Calu3 (cell line): ENCODE measurements at regions of chr6 and their contacts with region 1.

Region 1: GRCh38 chr6:28355743-28356665 is 6.3 kb downstream of the ZKSCAN3 start:
- DNase-seq: peak; percentile 83
- H3K4me3 Mint-ChIP-seq: peak overlapping the region; percentile 86
- H3K27ac Mint-ChIP-seq: peak overlapping the region; percentile 72
- H3K4me1 Mint-ChIP-seq: peaks cover 17% of the 10 kb centered on the region
- H3K27me3 Mint-ChIP-seq: no peaks in the 10 kb centered on the region
- CTCF ChIP-seq: peak; percentile 84

Region 2: DNA sequence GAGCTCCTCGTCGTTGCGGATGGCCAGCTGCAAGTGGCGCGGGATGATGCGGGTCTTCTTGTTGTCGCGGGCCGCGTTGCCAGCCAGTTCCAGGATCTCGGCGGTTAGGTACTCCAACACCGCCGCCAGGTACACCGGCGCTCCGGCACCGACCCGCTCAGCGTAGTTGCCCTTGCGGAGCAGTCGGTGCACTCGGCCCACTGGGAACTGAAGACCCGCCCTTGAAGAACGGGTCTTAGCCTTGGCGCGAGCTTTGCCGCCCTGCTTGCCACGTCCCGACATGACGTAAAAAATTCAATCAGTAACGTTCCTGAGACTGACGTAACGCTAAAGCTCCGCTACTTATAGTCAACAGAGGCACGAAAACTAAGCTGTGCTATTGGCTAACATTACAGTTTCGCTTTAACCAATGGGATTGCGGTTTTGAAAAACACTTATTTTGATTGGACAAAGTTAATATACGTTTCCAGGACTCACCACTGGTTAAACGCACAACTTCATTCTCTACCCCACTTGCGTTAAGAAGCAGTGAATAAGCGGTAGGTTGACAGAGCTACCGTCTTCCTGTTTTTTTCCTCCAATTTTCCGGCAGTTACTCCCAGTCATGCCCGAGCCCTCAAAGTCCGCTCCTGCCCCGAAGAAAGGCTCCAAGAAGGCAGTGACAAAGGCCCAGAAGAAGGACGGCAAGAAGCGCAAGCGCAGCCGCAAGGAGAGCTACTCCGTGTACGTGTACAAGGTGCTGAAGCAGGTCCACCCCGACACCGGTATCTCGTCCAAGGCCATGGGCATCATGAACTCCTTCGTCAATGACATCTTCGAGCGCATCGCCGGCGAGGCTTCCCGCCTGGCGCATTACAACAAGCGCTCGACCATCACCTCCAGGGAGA is 517.7 kb before region 1 on chr6:
- CTCF ChIA-PET with region 1: no interaction called
- intact Hi-C with region 1: loop called (anchors 10 kb)
- DNase-seq: peak; percentile 86
- H3K4me3 Mint-ChIP-seq: no peak overlapping the region
- H3K27ac Mint-ChIP-seq: no peak overlapping the region
- H3K4me1 Mint-ChIP-seq: peaks cover 17% of the 10 kb centered on the region
- H3K27me3 Mint-ChIP-seq: no peaks in the 10 kb centered on the region
- CTCF ChIP-seq: no peak

Region 3: GRCh38 chr6:28136585-28137504 is 219.2 kb before region 1 on chr6:
- CTCF ChIA-PET with region 1: interaction called, 10 read pairs
- intact Hi-C with region 1: loop called (anchors 2 kb)
- DNase-seq: peak; percentile 90
- H3K4me3 Mint-ChIP-seq: peak overlapping the region; percentile 97
- H3K27ac Mint-ChIP-seq: peak overlapping the region; percentile 93
- H3K4me1 Mint-ChIP-seq: peaks cover 30% of the 10 kb centered on the region
- H3K27me3 Mint-ChIP-seq: no peaks in the 10 kb centered on the region
- CTCF ChIP-seq: no peak

Region 4: GRCh38 chr6:28252009-28252975 is 103.7 kb before region 1 on chr6 and contains the start of gene ZKSCAN4:
- CTCF ChIA-PET with region 1: interaction called, 11 read pairs
- intact Hi-C with region 1: no loop called
- DNase-seq: peak; percentile 84
- H3K4me3 Mint-ChIP-seq: peak within 1 kb of the TSS; percentile 100
- H3K27ac Mint-ChIP-seq: peak within 1 kb of the TSS; percentile 64
- H3K4me1 Mint-ChIP-seq: peaks cover 10% of the 10 kb centered on the region
- H3K27me3 Mint-ChIP-seq: no peaks in the 10 kb centered on the region
- CTCF ChIP-seq: no peak
- total RNA-seq, gene ZKSCAN4: 6.1 and 6.7 TPM in 2 replicates

Region 5: DNA sequence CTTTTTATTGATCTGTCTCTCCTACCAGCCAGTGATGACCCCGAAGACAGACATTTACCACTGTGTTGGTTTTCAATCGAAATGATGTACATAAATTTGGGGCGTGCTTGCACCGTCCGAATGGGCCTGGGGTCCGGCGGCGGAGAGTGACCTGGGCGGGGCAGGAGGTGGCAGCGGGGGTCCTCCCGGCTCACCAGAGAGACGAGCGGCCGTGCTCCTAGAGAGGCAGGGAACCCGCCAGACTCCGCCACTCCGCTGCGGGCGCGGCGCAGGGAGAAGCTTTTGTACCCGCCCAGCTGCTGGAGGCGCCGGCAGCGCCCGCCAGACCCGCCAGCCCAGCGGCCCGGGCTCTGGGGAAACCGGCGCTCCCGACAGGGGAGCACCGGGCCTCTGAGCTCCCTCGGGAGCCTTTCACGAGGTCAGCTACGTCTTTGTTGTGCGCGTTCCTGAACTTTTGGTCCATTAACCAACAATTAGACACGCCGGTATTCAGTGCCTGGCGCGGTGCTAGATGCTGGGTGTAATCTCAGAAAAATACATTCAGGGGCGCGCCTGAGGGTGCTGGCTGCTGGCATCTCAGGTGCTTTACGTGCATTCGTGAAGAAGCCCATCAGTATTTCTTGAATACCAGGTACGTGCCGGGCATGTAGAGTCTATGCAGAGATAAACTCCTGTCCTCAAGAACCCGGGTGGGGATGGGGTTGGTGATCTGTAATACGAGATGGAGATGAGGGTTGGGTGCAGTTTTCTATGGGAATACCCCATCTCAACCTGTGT is 74.5 kb before region 1 on chr6 and contains the start of gene PGBD1:
- CTCF ChIA-PET with region 1: interaction called, 10 read pairs
- intact Hi-C with region 1: loop called (anchors 5 kb)
- DNase-seq: peak; percentile 86
- H3K4me3 Mint-ChIP-seq: peak within 1 kb of the TSS; percentile 91
- H3K27ac Mint-ChIP-seq: peak within 1 kb of the TSS; percentile 53
- H3K4me1 Mint-ChIP-seq: peaks cover 10% of the 10 kb centered on the region
- H3K27me3 Mint-ChIP-seq: no peaks in the 10 kb centered on the region
- CTCF ChIP-seq: no peak
- total RNA-seq, gene PGBD1: 3.1 and 4.9 TPM in 2 replicates

Region 6: DNA sequence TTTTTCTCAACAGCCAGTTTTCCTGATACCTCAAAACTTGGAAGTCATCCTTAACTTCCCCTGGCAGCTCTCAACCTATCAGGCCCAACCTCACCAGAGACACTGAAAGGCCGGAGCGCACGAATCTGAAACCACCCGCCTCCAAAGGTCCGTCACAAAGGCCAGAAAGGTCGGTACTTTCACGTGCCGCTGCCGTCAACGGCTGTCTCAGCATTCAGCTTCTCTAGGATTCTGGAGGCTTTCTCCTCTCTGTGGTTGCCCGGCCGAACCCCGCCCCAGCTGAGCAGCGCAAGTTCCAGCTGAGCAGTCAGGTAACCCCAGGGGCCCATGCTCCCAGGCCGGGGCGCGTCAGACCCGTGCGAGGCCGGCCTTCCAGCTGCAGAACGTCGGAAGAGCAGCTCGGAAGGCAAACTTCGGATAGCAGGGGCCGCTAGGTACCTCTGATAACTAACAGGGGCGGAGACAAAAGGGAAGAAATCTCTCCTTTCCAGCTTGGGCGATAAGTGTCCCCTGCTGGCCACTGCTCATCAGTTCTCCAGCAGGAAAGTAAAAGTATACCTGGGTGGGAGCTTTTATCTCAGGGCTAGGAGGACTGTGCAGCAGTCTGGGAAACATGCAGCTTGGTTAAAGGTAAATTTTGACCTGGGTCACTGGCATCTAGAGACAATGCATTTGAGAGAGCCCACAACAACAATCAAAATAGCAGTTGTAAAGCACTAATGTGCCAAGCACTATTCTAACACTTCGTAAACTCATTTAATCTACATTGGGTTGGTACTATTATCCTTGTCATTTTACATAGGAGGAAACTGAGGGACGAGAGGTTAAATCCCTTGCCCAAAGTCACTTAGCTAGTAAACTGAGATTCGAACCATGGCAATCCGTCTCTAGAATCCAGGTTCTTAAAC is 27.5 kb after region 1 on chr6:
- CTCF ChIA-PET with region 1: interaction called, 14 read pairs
- intact Hi-C with region 1: loop called (anchors 2 kb)
- DNase-seq: peak; percentile 90
- H3K4me3 Mint-ChIP-seq: peak overlapping the region; percentile 85
- H3K27ac Mint-ChIP-seq: peak overlapping the region; percentile 88
- H3K4me1 Mint-ChIP-seq: peaks cover 13% of the 10 kb centered on the region
- H3K27me3 Mint-ChIP-seq: no peaks in the 10 kb centered on the region
- CTCF ChIP-seq: peak; percentile 77

Region 7: GRCh38 chr6:28399350-28400121 is 43.5 kb after region 1 on chr6 and contains the start of gene ZSCAN12:
- CTCF ChIA-PET with region 1: no interaction called
- intact Hi-C with region 1: no loop called
- DNase-seq: peak; percentile 64
- H3K4me3 Mint-ChIP-seq: peak within 1 kb of the TSS; percentile 73
- H3K27ac Mint-ChIP-seq: peak within 1 kb of the TSS; percentile 25
- H3K4me1 Mint-ChIP-seq: peaks cover 23% of the 10 kb centered on the region
- H3K27me3 Mint-ChIP-seq: no peaks in the 10 kb centered on the region
- CTCF ChIP-seq: no peak
- total RNA-seq, gene ZSCAN12: 4.7 and 5.2 TPM in 2 replicates